HepG2 (cell line): ENCODE measurements at regions of chr1 and their contacts with region 1.

Region 1: DNA sequence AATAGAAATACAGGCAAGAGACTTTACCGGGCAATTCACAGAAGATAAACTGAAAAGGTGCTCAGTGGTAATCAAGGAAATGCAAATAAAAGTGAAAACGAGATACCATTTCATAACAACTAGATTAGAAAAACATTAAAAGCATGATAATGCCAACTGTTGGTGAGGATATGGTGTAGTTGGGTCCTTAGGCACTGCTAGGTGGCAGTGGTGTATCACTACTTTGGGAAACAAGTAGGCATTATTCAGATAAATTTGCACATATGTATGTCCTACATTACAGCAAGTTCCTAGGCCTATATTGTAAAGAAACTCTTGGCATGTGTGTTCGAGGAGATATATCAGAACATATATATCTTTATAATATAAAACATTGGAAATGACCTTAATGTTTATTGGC is 31.0 kb downstream of the AZIN2 start:
- DNase-seq: peak; percentile 16
- ATAC-seq: no peak
- H3K4me3 ChIP-seq: no peak overlapping the region
- H3K27ac ChIP-seq: no peak overlapping the region
- H3K4me1 ChIP-seq: peaks cover under 1% of the 10 kb centered on the region; the same call in 1 of the 2 replicates
- H3K27me3 ChIP-seq: no peaks in the 10 kb centered on the region
- CTCF ChIP-seq: peak; percentile 48; the same call in 1 of the 2 replicates
- EP300 ChIP-seq: no peak
- POLR2A ChIP-seq: no peak
- RAD21 ChIP-seq: no peak

Region 2: GRCh38 chr1:32939655-32940371 is 172.2 kb before region 1 on chr1:
- CTCF ChIA-PET with region 1: no interaction called
- POLR2A ChIA-PET with region 1: no interaction called
- in situ Hi-C with region 1: no loop called
- intact Hi-C with region 1: no loop called
- DNase-seq: no peak
- ATAC-seq: no peak
- H3K4me3 ChIP-seq: no peak overlapping the region
- H3K27ac ChIP-seq: no peak overlapping the region
- H3K4me1 ChIP-seq: peaks cover 30% of the 10 kb centered on the region
- H3K27me3 ChIP-seq: no peaks in the 10 kb centered on the region
- CTCF ChIP-seq: no peak
- EP300 ChIP-seq: no peak
- POLR2A ChIP-seq: no peak
- RAD21 ChIP-seq: no peak

Region 3: GRCh38 chr1:33176362-33176850 is 64.4 kb after region 1 on chr1:
- CTCF ChIA-PET with region 1: no interaction called
- POLR2A ChIA-PET with region 1: no interaction called
- in situ Hi-C with region 1: loop called (anchors 10 kb)
- intact Hi-C with region 1: no loop called
- DNase-seq: no peak
- ATAC-seq: no peak
- H3K4me3 ChIP-seq: no peak overlapping the region
- H3K27ac ChIP-seq: no peak overlapping the region
- H3K4me1 ChIP-seq: peaks cover 17% of the 10 kb centered on the region
- H3K27me3 ChIP-seq: no peaks in the 10 kb centered on the region
- CTCF ChIP-seq: no peak
- EP300 ChIP-seq: no peak
- POLR2A ChIP-seq: no peak
- RAD21 ChIP-seq: no peak